A673 (cell line): ENCODE measurements at regions of chrX and their contacts with region 1.

Region 1: DNA sequence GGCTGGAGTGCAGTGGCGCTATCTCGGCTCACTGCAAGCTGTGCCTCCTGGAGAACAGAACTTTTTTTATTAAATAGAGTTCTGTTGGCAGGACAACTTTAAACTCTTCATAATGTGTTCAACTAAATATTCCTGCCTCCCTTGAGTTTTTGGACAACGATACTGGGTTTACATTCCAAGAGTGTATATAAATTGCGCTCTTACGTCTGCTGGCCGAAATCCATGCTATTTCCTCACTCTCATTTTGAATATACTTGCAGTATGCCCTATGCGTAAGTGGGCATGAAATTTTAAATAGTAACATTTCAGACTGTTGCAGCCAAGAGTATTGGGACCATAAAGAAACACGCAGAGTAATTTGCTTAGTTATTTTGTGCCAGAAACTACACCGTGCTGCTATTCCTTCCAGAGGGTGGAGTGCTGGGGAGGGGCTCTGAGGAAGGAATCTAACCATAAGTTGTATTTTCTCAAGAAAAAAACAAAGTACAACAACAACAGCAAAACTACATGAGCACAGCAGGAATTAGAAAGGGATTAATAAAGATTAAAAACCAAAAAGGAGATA is 480.0 kb downstream of the NLGN4X start:
- DNase-seq: peak; percentile 90
- H3K4me3 ChIP-seq: peak overlapping the region; percentile 5
- H3K27ac ChIP-seq: peak overlapping the region; percentile 96
- H3K4me1 ChIP-seq: peaks cover 45% of the 10 kb centered on the region
- H3K27me3 ChIP-seq: no peaks in the 10 kb centered on the region
- CTCF ChIP-seq: no peak

Region 2: GRCh38 chrX:5458300-5458842 is 290.3 kb before region 1 on chrX:
- CTCF ChIA-PET with region 1: no interaction called
- POLR2A ChIA-PET with region 1: no interaction called
- intact Hi-C with region 1: loop called (anchors 10 kb)
- DNase-seq: peak; percentile 66
- H3K4me3 ChIP-seq: no peak overlapping the region
- H3K27ac ChIP-seq: no peak overlapping the region
- H3K4me1 ChIP-seq: no peaks in the 10 kb centered on the region
- H3K27me3 ChIP-seq: no peaks in the 10 kb centered on the region
- CTCF ChIP-seq: peak; percentile 60

Region 3: DNA sequence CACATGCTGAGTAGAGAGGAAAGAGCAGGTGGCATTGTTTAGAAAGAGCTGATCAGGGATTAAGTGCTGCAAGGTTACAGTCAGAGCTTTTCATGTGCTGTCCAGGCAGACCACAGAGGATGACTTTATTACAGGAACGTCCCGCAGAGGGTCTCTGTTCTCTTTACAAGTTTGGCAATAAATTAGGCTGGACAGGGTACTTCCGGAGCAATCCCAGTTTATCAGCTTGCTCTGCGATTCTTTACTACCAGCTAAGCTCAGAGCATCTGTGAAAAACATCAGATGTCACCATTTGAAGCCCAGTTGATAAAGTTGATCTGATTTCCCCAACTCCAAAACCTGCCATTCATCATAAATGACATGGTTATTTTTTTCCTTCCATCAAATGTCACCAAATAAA is 153.1 kb before region 1 on chrX:
- CTCF ChIA-PET with region 1: no interaction called
- POLR2A ChIA-PET with region 1: no interaction called
- intact Hi-C with region 1: loop called (anchors 5 kb)
- DNase-seq: peak; percentile 75
- H3K4me3 ChIP-seq: no peak overlapping the region
- H3K27ac ChIP-seq: peak overlapping the region; percentile 21
- H3K4me1 ChIP-seq: peaks cover 8% of the 10 kb centered on the region
- H3K27me3 ChIP-seq: no peaks in the 10 kb centered on the region
- CTCF ChIP-seq: no peak

Region 4: GRCh38 chrX:5708251-5708650 is 40.4 kb before region 1 on chrX:
- CTCF ChIA-PET with region 1: no interaction called
- POLR2A ChIA-PET with region 1: no interaction called
- intact Hi-C with region 1: loop called (anchors 5 kb)
- DNase-seq: peak; percentile 84
- H3K4me3 ChIP-seq: peak overlapping the region; percentile 16
- H3K27ac ChIP-seq: peak overlapping the region; percentile 73
- H3K4me1 ChIP-seq: peaks cover 42% of the 10 kb centered on the region
- H3K27me3 ChIP-seq: no peaks in the 10 kb centered on the region
- CTCF ChIP-seq: no peak